Activated naive CD4-positive, alpha-beta T cell treated with anti-CD3 and anti-CD28 coated beads for 36 hours (primary cell): ENCODE measurements at regions of chr10 and their contacts with region 1.

Region 1: GRCh38 chr10:116385994-116386809 is 41.4 kb upstream of the PNLIPRP3 start:
- DNase-seq: no peak
- H3K4me3 Mint-ChIP-seq: no peak overlapping the region
- H3K27ac Mint-ChIP-seq: no peak overlapping the region
- H3K4me1 Mint-ChIP-seq: no peaks in the 10 kb centered on the region
- H3K27me3 Mint-ChIP-seq: no peaks in the 10 kb centered on the region

Region 2: DNA sequence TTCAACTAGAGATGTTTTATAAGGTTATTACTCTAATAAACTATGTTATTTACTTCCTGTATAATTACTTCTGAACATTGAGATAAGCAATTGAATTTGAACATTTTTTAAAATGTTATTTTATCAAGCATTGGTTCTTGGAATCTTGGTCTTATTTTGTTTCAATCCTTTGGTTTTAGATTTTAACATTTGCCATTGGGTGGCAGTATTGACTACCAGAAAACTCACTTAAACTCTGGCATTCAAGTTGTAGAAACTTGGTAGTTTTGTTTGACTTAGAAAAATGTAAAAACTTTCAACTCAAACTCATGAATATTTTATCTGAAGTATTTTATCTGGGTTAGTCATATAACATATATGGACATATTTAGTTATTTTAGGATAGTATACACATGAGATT is 1244.9 kb before region 1 on chr10:
- CTCF ChIA-PET with region 1: interaction called, 3 read pairs
- intact Hi-C with region 1: loop called (anchors 1 kb)
- DNase-seq: no peak
- H3K4me3 Mint-ChIP-seq: no peak overlapping the region
- H3K27ac Mint-ChIP-seq: no peak overlapping the region
- H3K4me1 Mint-ChIP-seq: no peaks in the 10 kb centered on the region
- H3K27me3 Mint-ChIP-seq: peaks cover 5% of the 10 kb centered on the region

Region 3: DNA sequence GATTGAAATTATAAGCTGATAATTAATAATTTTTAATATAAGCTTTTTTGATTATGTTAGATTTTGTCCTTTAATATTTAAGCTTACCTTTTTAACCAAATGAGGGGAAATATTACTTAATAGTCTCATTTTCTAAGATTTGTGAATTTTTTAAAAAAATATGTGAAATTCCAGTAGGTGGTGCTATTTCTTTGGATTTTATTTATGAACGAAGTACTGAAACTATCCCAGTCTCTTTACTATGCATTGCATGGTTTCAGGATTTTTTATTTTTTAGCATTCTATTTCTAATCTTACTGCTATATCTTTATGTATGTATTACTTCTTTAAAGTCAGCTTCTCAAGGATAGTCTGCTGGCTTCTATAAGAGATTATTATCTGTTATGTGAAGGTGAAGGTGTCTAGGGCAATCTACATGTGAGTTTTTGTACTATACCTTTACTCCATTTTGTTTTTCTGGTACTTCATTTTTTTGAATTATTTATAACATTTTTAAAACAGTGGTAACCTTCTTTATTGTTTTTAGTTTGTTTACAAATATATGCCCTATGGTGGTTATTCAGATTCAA is 1214.7 kb before region 1 on chr10:
- CTCF ChIA-PET with region 1: interaction called, 7 read pairs
- intact Hi-C with region 1: loop called (anchors 1 kb)
- DNase-seq: no peak
- H3K4me3 Mint-ChIP-seq: no peak overlapping the region
- H3K27ac Mint-ChIP-seq: no peak overlapping the region
- H3K4me1 Mint-ChIP-seq: no peaks in the 10 kb centered on the region
- H3K27me3 Mint-ChIP-seq: no peaks in the 10 kb centered on the region

Region 4: GRCh38 chr10:115706026-115706781 is 680.0 kb before region 1 on chr10:
- CTCF ChIA-PET with region 1: interaction called, 3 read pairs
- intact Hi-C with region 1: loop called (anchors 1 kb)
- DNase-seq: no peak
- H3K4me3 Mint-ChIP-seq: no peak overlapping the region
- H3K27ac Mint-ChIP-seq: no peak overlapping the region
- H3K4me1 Mint-ChIP-seq: no peaks in the 10 kb centered on the region
- H3K27me3 Mint-ChIP-seq: no peaks in the 10 kb centered on the region

Region 5: GRCh38 chr10:115795964-115796363 is 590.2 kb before region 1 on chr10:
- CTCF ChIA-PET with region 1: interaction called, 3 read pairs
- intact Hi-C with region 1: loop called (anchors 5 kb)
- DNase-seq: no peak
- H3K4me3 Mint-ChIP-seq: no peak overlapping the region
- H3K27ac Mint-ChIP-seq: no peak overlapping the region
- H3K4me1 Mint-ChIP-seq: no peaks in the 10 kb centered on the region
- H3K27me3 Mint-ChIP-seq: no peaks in the 10 kb centered on the region

Region 6: DNA sequence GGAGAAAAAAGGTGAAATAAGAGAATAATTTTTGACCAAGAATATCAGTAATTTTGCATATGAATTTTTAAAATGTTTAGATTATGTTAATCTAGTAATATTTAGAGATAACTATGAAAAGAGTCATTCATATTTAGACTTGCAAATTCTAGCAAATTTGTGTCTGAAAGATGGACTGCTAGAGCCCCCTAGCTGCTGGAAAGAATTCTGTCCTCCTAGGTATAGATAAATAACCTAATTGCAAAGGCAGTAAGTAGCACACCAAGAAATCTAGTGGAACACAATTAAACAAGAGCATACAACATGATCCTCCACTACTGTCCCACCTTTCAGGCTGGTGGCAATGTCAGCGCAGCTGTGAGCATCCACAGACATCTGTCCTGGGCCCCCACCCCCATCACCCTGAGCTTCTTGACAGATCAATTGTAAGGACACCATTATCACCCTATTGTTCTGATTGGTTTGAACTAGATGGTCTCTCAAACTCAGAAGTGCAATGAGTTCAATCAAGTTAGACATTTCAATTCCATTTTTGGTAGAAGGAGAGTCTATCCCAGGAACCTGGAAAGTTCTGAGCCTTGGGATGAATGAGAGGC is 98.2 kb before region 1 on chr10:
- CTCF ChIA-PET with region 1: no interaction called
- intact Hi-C with region 1: no loop called
- DNase-seq: peak; percentile 43
- H3K4me3 Mint-ChIP-seq: no peak overlapping the region
- H3K27ac Mint-ChIP-seq: no peak overlapping the region
- H3K4me1 Mint-ChIP-seq: no peaks in the 10 kb centered on the region
- H3K27me3 Mint-ChIP-seq: peaks cover 7% of the 10 kb centered on the region

Region 7: DNA sequence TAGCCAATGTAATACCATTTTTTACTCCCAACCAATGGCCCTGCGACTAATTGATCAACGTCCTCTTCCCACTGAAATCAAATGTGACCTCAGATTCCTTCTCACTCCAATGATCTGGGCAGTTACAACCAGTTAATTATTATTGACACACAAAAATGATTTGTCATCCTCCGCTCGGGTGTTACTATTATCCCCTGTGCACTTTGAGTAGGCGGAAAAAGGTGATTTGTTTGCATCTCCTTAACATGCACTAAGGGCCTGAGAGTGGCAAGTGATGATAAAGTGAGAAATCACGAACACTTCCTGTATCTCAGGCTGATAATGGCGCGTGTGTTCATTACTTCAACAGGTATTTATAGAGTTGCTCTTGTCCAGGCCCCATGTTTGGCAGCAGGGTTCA is 118.6 kb after region 1 on chr10:
- CTCF ChIA-PET with region 1: no interaction called
- intact Hi-C with region 1: no loop called
- DNase-seq: no peak
- H3K4me3 Mint-ChIP-seq: no peak overlapping the region
- H3K27ac Mint-ChIP-seq: no peak overlapping the region
- H3K4me1 Mint-ChIP-seq: no peaks in the 10 kb centered on the region
- H3K27me3 Mint-ChIP-seq: peaks cover 5% of the 10 kb centered on the region

Region 8: GRCh38 chr10:116665541-116666125 is 279.4 kb after region 1 on chr10:
- CTCF ChIA-PET with region 1: no interaction called
- intact Hi-C with region 1: no loop called
- DNase-seq: no peak
- H3K4me3 Mint-ChIP-seq: no peak overlapping the region
- H3K27ac Mint-ChIP-seq: no peak overlapping the region
- H3K4me1 Mint-ChIP-seq: no peaks in the 10 kb centered on the region
- H3K27me3 Mint-ChIP-seq: peaks cover 18% of the 10 kb centered on the region